HCT116 (cell line): ENCODE measurements at regions of chr2 and their contacts with region 1.

Region 1: GRCh38 chr2:71798266-71799012 is 345.1 kb downstream of the DYSF start:
- DNase-seq: peak; percentile 34
- ATAC-seq: peak; percentile 86
- H3K4me3 ChIP-seq: no peak overlapping the region
- H3K27ac ChIP-seq: no peak overlapping the region
- H3K4me1 ChIP-seq: peaks cover 0 to 8% of the 10 kb centered on the region in 2 experiments; a peak in 1 of 4 replicates
- H3K27me3 ChIP-seq: no peaks in the 10 kb centered on the region
- CTCF ChIP-seq: peak; percentile 92 to 98 (median 92)
- POLR2A ChIP-seq: no peak
- RAD21 ChIP-seq: peak; percentile 84

Region 2: GRCh38 chr2:71530641-71531332 is 267.7 kb before region 1 on chr2:
- CTCF ChIA-PET with region 1: interaction called, 10 read pairs
- POLR2A ChIA-PET with region 1: no interaction called
- RAD21 ChIA-PET with region 1: interaction called in 1 of 2 experiments, 3 read pairs
- intact Hi-C with region 1: loop called (anchors 1 kb)
- DNase-seq: peak; percentile 31
- ATAC-seq: peak; percentile 85
- H3K4me3 ChIP-seq: no peak overlapping the region; a peak in 1 of 4 replicates
- H3K27ac ChIP-seq: no peak overlapping the region
- H3K4me1 ChIP-seq: peaks cover 0 to 18% of the 10 kb centered on the region in 2 experiments; a peak in 2 of 4 replicates
- H3K27me3 ChIP-seq: no peaks in the 10 kb centered on the region
- CTCF ChIP-seq: peak; percentile 65 to 82 (median 71); a peak in 5 of 6 replicates
- POLR2A ChIP-seq: no peak
- RAD21 ChIP-seq: peak; percentile 80

Region 3: GRCh38 chr2:71609958-71610357 is 188.5 kb before region 1 on chr2:
- CTCF ChIA-PET with region 1: interaction called, 13 read pairs
- POLR2A ChIA-PET with region 1: no interaction called
- RAD21 ChIA-PET with region 1: no interaction called
- intact Hi-C with region 1: loop called (anchors 2 kb)
- DNase-seq: peak; percentile 24
- ATAC-seq: peak; percentile 83
- H3K4me3 ChIP-seq: no peak overlapping the region
- H3K27ac ChIP-seq: no peak overlapping the region
- H3K4me1 ChIP-seq: no peaks in the 10 kb centered on the region
- H3K27me3 ChIP-seq: peaks cover 13% of the 10 kb centered on the region; the same call in 1 of the 2 replicates
- CTCF ChIP-seq: peak; percentile 8 to 61 (median 53); a peak in 3 of 6 replicates
- POLR2A ChIP-seq: no peak
- RAD21 ChIP-seq: peak; percentile 68

Region 4: DNA sequence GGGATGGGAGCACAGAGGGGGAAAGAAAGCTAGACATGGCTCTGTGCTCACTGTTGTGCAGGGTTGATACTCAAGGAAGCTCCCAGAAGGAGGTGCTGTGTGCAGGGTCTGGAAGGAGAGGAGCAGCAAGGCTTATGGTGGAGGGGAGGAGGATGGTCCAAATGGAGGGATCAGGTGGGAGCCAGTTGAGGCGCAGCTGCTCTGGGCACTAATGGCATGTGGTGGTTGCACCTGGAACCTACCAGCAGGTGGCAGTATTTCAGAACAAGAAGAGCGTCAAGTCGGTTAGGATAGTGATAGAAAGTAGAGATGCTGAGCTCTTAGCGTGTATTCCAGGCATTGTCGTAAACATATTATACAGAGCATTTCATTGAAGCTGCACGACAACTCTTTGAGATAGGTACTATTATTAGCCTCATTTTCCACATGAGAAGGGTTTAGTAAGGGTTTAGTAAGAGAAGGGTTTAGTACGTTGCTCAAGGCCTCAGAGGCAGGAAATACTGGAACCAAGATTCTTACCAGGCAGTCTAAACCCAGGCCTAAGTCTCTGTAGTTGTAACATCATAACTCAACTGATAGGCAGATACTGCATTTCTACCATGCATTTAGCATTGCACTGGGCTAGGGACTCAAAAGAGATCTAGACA is 125.6 kb after region 1 on chr2:
- CTCF ChIA-PET with region 1: interaction called, 4 read pairs
- POLR2A ChIA-PET with region 1: no interaction called
- RAD21 ChIA-PET with region 1: no interaction called
- intact Hi-C with region 1: loop called (anchors 5 kb)
- DNase-seq: peak; percentile 72
- ATAC-seq: peak; percentile 93
- H3K4me3 ChIP-seq: no peak overlapping the region
- H3K27ac ChIP-seq: no peak overlapping the region
- H3K4me1 ChIP-seq: peaks cover 0 to 7% of the 10 kb centered on the region in 2 experiments; a peak in 1 of 4 replicates
- H3K27me3 ChIP-seq: no peaks in the 10 kb centered on the region
- CTCF ChIP-seq: peak; percentile 80 to 92 (median 88)
- POLR2A ChIP-seq: no peak
- RAD21 ChIP-seq: peak; percentile 87

Region 5: DNA sequence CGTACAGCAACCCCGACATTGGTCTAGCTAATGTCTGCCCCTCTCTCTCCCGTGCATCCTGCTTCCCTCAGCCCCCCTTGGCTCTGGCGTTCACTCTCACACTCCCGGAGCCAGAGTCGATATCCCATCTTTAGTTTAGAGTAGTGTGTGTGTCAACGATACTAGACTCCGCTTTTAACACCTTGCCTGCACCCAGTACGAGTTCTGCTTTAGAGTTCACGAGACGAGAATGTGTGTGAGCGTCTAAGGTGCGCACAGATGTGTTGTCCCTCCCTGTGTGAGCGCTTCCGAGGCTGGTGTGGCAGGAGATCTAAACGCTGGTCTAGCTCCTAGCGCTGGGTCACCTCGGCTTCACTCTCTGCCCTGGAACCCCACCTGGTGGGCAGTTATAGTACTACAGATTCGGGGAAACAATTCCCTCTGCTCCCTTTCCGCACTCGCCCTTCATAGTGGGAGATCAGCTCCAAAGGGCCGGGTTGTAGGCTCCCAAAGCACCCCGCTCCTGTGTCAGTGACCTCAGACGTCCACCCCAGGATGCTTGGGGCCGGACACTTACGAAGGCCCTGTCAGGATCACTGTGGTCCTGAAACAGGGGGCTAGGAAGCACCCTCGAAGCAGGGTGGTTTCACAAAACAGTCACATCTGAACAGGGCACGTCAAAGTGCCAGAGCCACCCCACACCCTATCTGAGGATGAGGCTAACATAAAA is 351.9 kb after region 1 on chr2:
- CTCF ChIA-PET with region 1: interaction called, 13 read pairs
- POLR2A ChIA-PET with region 1: interaction called, 3 read pairs
- RAD21 ChIA-PET with region 1: interaction called, 3 to 8 read pairs
- intact Hi-C with region 1: loop called (anchors 1 kb)
- DNase-seq: peak; percentile 63
- ATAC-seq: peak; percentile 75
- H3K4me3 ChIP-seq: no peak overlapping the region
- H3K27ac ChIP-seq: no peak overlapping the region
- H3K4me1 ChIP-seq: peaks cover 11 to 34% of the 10 kb centered on the region in 2 experiments; a peak in 3 of 4 replicates
- H3K27me3 ChIP-seq: no peaks in the 10 kb centered on the region
- CTCF ChIP-seq: peak; percentile 70 to 86 (median 77)
- POLR2A ChIP-seq: no peak
- RAD21 ChIP-seq: peak; percentile 95

Region 6: DNA sequence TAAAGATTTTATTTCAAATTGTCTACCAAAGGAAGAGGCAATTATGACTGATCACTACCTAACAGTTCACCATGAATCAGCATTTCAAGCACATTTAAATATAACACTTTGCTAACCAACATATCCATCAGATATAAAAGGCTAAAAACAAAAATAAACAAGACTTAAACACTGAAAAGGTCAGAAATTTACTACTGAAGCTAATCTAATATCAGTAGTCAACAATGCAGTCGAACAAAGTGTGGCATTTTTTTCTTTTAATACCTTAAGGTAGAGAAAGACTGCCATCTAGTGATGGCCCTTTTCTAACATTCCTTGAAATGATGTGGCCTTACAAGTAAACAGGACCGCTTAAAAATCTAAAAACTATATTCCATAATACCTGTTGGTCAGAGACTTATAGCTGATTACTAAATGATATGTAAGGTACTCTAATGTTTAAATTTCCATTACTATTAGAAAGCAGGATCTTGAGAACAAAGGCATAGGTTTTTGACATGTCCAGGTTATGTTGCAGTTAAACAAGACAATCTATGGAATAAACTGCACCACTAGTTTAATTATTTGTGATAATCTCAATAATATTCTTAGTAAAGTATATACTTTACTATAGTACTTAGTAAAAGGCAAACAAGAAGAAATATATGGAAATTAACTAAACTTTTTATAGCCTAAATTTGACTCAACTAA is 947.4 kb after region 1 on chr2:
- CTCF ChIA-PET with region 1: no interaction called
- POLR2A ChIA-PET with region 1: no interaction called
- RAD21 ChIA-PET with region 1: no interaction called
- intact Hi-C with region 1: loop called (anchors 2 kb)
- DNase-seq: peak; percentile 48
- ATAC-seq: peak; percentile 50
- H3K4me3 ChIP-seq: no peak overlapping the region
- H3K27ac ChIP-seq: no peak overlapping the region
- H3K4me1 ChIP-seq: peaks cover 0 to 3% of the 10 kb centered on the region in 2 experiments; a peak in 1 of 4 replicates
- H3K27me3 ChIP-seq: no peaks in the 10 kb centered on the region
- CTCF ChIP-seq: peak; percentile 50 to 85 (median 59); a peak in 5 of 6 replicates
- POLR2A ChIP-seq: no peak
- RAD21 ChIP-seq: peak; percentile 79